Activated CD8-positive, alpha-beta T cell treated with anti-CD3 and anti-CD28 coated beads, Interleukin-2, amount 10 ng/mL, durations not matched to agents 7 days and 5 days (primary cell): ENCODE measurements at regions of chr1 and their contacts with region 1.

Region 1: DNA sequence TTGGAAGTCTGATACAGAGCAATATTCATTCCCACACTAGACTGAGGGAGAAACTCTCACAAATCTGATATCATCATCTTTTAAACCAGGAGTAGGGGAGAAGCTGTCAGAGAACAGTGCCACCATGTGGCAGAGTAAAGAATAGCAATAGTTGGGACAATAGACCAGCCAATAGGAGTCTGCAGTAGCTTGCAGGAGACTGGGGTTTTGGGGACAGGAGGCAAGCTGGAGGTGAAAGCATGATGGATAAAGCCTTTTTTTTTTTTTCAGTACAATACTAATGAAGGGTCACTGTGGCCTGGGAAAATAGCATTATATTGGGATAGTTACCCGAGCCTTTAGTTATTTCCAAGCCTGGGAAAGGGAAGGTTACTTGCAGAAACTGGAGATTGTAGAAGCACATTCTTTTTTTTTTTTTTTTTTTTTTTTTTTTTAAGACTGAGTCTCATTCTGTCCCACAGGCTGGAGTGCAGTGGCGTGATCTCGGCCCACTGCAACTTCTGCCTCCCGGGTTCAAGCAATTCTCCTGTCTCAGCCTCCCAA is 120.7 kb downstream of the S1PR1 start:
- DNase-seq: peak; percentile 85
- ATAC-seq: peak; percentile 100
- H3K4me3 Mint-ChIP-seq: no peak overlapping the region
- H3K27ac Mint-ChIP-seq: peak overlapping the region; percentile 60
- H3K4me1 Mint-ChIP-seq: peaks cover 8% of the 10 kb centered on the region
- H3K27me3 Mint-ChIP-seq: peaks cover 5% of the 10 kb centered on the region

Region 2: DNA sequence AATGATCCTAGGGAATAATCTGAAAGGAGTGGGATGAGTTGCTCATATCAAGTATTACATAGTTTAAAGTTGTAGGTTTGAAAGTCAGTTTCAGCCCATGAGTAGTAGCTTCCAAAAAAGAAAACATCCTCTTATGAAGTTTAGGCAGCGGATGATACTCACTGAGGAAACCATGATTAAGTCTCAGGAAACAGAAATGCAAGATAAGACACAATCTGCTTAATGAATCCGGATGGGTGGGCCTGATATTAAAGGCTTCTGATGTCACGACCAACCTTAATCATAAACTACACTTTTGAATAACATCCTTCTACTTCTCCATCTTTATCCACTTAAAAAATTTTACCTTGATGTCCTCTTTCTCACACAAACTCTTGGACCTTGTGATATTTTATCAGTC is 58.9 kb before region 1 on chr1:
- CTCF ChIA-PET with region 1: interaction called, 13 read pairs
- POLR2A ChIA-PET with region 1: no interaction called
- DNase-seq: no peak
- ATAC-seq: no peak
- H3K4me3 Mint-ChIP-seq: no peak overlapping the region
- H3K27ac Mint-ChIP-seq: no peak overlapping the region
- H3K4me1 Mint-ChIP-seq: peaks cover 14% of the 10 kb centered on the region
- H3K27me3 Mint-ChIP-seq: peaks cover 29% of the 10 kb centered on the region

Region 3: GRCh38 chr1:101317590-101317989 is 39.9 kb before region 1 on chr1:
- CTCF ChIA-PET with region 1: interaction called, 199 read pairs
- POLR2A ChIA-PET with region 1: interaction called, 3 read pairs
- DNase-seq: no peak
- ATAC-seq: no peak
- H3K4me3 Mint-ChIP-seq: no peak overlapping the region
- H3K27ac Mint-ChIP-seq: no peak overlapping the region
- H3K4me1 Mint-ChIP-seq: peaks cover 19% of the 10 kb centered on the region
- H3K27me3 Mint-ChIP-seq: peaks cover 13% of the 10 kb centered on the region

Region 4: GRCh38 chr1:101338714-101339430 is 18.6 kb before region 1 on chr1:
- CTCF ChIA-PET with region 1: interaction called, 12 read pairs
- POLR2A ChIA-PET with region 1: no interaction called
- DNase-seq: no peak
- ATAC-seq: peak; percentile 64
- H3K4me3 Mint-ChIP-seq: no peak overlapping the region
- H3K27ac Mint-ChIP-seq: no peak overlapping the region
- H3K4me1 Mint-ChIP-seq: peaks cover 7% of the 10 kb centered on the region
- H3K27me3 Mint-ChIP-seq: no peaks in the 10 kb centered on the region

Region 5: GRCh38 chr1:101344745-101345144 is 12.8 kb before region 1 on chr1:
- CTCF ChIA-PET with region 1: interaction called, 26 read pairs
- POLR2A ChIA-PET with region 1: no interaction called
- DNase-seq: no peak
- ATAC-seq: no peak
- H3K4me3 Mint-ChIP-seq: no peak overlapping the region
- H3K27ac Mint-ChIP-seq: no peak overlapping the region
- H3K4me1 Mint-ChIP-seq: peaks cover 38% of the 10 kb centered on the region
- H3K27me3 Mint-ChIP-seq: no peaks in the 10 kb centered on the region

Region 6: GRCh38 chr1:101371259-101371658 is 13.7 kb after region 1 on chr1:
- CTCF ChIA-PET with region 1: interaction called, 24 read pairs
- POLR2A ChIA-PET with region 1: no interaction called
- DNase-seq: peak; percentile 24
- ATAC-seq: peak; percentile 92
- H3K4me3 Mint-ChIP-seq: no peak overlapping the region
- H3K27ac Mint-ChIP-seq: peak overlapping the region; percentile 26
- H3K4me1 Mint-ChIP-seq: peaks cover 12% of the 10 kb centered on the region
- H3K27me3 Mint-ChIP-seq: peaks cover 2% of the 10 kb centered on the region